Activated naive CD8-positive, alpha-beta T cell treated with anti-CD3 and anti-CD28 coated beads, Interleukin-2, amount 10 ng/mL, durations not matched to agents 7 days and 5 days (primary cell): ENCODE measurements at regions of chr9 and their contacts with region 1.

Region 1: DNA sequence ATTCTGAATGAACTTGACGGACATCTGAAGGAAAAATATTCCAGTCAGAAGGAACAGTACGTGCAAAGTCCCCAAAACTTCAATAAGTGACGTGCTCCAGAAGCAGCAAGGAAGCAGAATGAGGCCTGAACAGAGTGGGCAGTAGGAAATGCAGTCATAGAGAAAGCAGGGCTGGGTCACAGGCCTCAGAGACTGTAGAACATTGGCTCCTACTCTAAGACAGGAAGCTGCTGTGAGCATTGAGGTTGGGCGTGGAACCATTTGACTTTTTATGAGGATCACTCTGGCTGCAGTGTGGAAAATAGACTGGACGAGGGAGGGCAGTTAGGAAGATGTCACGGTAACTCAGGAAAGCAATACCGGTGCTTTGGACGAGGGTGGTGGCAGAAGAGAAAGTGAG is 64.0 kb downstream of the DOCK8 start:
- DNase-seq: peak; percentile 36
- ATAC-seq: peak; percentile 84
- H3K4me3 Mint-ChIP-seq: no peak overlapping the region
- H3K27ac Mint-ChIP-seq: no peak overlapping the region
- H3K4me1 Mint-ChIP-seq: peaks cover 33% of the 10 kb centered on the region
- H3K27me3 Mint-ChIP-seq: no peaks in the 10 kb centered on the region

Region 2: GRCh38 chr9:214648-215493 is 63.8 kb before region 1 on chr9 and contains the start of gene DOCK8:
- POLR2A ChIA-PET with region 1: interaction called, 129 read pairs
- DNase-seq: peak; percentile 85
- ATAC-seq: peak; percentile 82
- H3K4me3 Mint-ChIP-seq: peak within 1 kb of the TSS; percentile 87
- H3K27ac Mint-ChIP-seq: peak within 1 kb of the TSS; percentile 88
- H3K4me1 Mint-ChIP-seq: peaks cover 22% of the 10 kb centered on the region
- H3K27me3 Mint-ChIP-seq: no peaks in the 10 kb centered on the region
- total RNA-seq, gene DOCK8: 318 to 319 TPM

Region 3: DNA sequence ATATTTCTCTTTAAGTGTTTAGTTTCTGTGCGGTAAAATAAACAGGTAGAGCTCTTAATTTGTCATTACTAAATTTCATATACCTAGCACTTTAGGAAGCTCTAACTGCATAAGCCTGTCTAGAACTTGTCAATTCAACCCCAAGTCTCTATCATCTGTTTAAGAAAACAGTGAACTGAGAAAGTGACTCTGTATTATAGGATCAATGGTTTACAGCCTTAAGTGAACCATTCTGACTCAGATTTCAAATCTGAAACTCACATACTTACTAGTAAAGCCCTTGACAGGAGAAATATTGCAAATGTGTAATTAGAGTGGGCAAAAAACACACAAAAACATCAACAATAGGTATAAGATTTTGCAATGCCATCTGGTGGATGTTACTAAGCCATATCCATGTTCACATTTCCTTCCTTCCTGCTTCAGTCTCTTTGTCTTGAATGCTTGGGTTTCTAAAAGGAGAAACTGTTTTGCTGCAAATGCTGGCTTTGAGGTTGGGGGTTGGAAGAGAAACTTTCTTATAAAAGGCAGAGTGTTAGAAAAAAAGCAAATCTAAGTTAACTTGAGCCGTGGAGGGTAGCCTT is 37.8 kb after region 1 on chr9:
- POLR2A ChIA-PET with region 1: no interaction called
- DNase-seq: no peak
- ATAC-seq: no peak
- H3K4me3 Mint-ChIP-seq: no peak overlapping the region
- H3K27ac Mint-ChIP-seq: no peak overlapping the region
- H3K4me1 Mint-ChIP-seq: no peaks in the 10 kb centered on the region
- H3K27me3 Mint-ChIP-seq: no peaks in the 10 kb centered on the region